WTC11 (cell line): ENCODE measurements at regions of chr11 and their contacts with region 1.

Region 1: GRCh38 chr11:123020968-123021367 is 39.3 kb upstream of the BSX start:
- DNase-seq: peak; percentile 36
- ATAC-seq: peak; percentile 95
- H3K4me3 Mint-ChIP-seq: no peak overlapping the region
- H3K27ac Mint-ChIP-seq: no peak overlapping the region
- H3K4me1 Mint-ChIP-seq: peaks cover 8% of the 10 kb centered on the region
- H3K27me3 Mint-ChIP-seq: peaks cover 9% of the 10 kb centered on the region
- CTCF ChIP-seq: no peak; the same call in 1 of the 2 replicates

Region 2: GRCh38 chr11:122796128-122796717 is 224.7 kb before region 1 on chr11:
- CTCF ChIA-PET with region 1: interaction called, 11 read pairs
- POLR2A ChIA-PET with region 1: no interaction called
- DNase-seq: peak; percentile 84
- ATAC-seq: peak; percentile 98
- H3K4me3 Mint-ChIP-seq: no peak overlapping the region
- H3K27ac Mint-ChIP-seq: no peak overlapping the region
- H3K4me1 Mint-ChIP-seq: peaks cover 4% of the 10 kb centered on the region; the same call in 1 of the 2 replicates
- H3K27me3 Mint-ChIP-seq: no peaks in the 10 kb centered on the region
- CTCF ChIP-seq: peak; percentile 86

Region 3: DNA sequence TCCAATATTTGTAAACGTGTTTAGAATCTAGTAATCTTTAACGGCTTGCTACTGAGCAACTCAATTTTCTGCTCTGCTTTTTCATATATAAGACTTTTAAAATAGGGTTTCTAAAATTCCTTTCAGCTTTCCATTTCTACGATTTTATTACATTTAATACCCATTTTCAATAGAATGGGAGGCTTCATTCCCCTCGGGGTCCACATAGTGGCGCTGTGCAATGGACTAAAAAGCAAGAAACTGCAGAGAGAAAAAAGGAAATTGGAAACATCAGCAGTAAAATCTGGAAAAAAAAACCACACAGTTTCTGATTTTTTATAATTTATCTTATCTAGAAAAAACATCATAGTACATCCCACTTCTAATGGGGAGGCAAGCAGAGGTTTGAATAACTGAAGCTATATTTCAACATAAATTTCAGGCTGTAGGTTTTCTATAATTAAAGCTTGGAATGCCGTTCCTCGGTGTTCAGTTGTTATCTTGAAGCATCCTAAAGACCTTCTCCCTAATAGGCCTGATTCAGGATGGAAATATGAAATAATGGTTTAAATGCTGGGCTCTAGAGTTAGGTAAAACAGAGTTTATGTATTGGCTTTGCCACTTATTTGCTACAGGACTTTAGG is 157.2 kb before region 1 on chr11:
- CTCF ChIA-PET with region 1: interaction called, 55 read pairs
- POLR2A ChIA-PET with region 1: no interaction called
- DNase-seq: peak; percentile 47
- ATAC-seq: no peak
- H3K4me3 Mint-ChIP-seq: no peak overlapping the region
- H3K27ac Mint-ChIP-seq: no peak overlapping the region
- H3K4me1 Mint-ChIP-seq: no peaks in the 10 kb centered on the region; the same call in 1 of the 2 replicates
- H3K27me3 Mint-ChIP-seq: no peaks in the 10 kb centered on the region
- CTCF ChIP-seq: peak; percentile 44; the same call in 1 of the 2 replicates

Region 4: DNA sequence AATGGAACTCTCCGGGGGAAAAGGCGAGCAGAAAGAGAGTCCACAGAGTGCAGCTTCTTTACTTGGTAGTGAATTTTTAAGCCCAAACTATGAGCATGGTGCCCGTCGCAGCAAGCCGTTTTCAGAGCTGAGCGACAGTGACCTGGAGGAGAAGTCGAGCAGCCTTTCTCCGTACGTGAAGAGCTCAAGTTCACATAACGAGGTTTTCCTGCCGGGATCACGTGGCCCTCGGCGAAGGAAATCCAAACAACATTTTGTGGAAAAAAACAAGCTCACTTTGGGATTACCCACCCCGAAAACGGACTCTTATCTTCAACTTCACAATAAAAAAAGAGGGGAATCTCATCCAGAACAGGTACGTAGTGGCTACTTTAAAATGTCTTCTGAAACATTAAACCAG is 116.9 kb before region 1 on chr11:
- CTCF ChIA-PET with region 1: interaction called, 13 read pairs
- POLR2A ChIA-PET with region 1: no interaction called
- DNase-seq: no peak
- ATAC-seq: no peak
- H3K4me3 Mint-ChIP-seq: no peak overlapping the region
- H3K27ac Mint-ChIP-seq: peak overlapping the region; percentile 57
- H3K4me1 Mint-ChIP-seq: peaks cover 6% of the 10 kb centered on the region
- H3K27me3 Mint-ChIP-seq: no peaks in the 10 kb centered on the region
- CTCF ChIP-seq: no peak

Region 5: GRCh38 chr11:122981388-122982264 is 39.3 kb before region 1 on chr11 and contains the start of gene BSX:
- CTCF ChIA-PET with region 1: interaction called, 38 read pairs
- POLR2A ChIA-PET with region 1: interaction called, 3 read pairs
- DNase-seq: peak; percentile 95
- ATAC-seq: peak; percentile 80
- H3K4me3 Mint-ChIP-seq: peak within 1 kb of the TSS; percentile 47
- H3K27ac Mint-ChIP-seq: no peak within 1 kb of the TSS
- H3K4me1 Mint-ChIP-seq: peaks cover 51% of the 10 kb centered on the region
- H3K27me3 Mint-ChIP-seq: peaks cover 100% of the 10 kb centered on the region
- CTCF ChIP-seq: no peak
- total RNA-seq, gene BSX: not detected in 3 replicates

Region 6: DNA sequence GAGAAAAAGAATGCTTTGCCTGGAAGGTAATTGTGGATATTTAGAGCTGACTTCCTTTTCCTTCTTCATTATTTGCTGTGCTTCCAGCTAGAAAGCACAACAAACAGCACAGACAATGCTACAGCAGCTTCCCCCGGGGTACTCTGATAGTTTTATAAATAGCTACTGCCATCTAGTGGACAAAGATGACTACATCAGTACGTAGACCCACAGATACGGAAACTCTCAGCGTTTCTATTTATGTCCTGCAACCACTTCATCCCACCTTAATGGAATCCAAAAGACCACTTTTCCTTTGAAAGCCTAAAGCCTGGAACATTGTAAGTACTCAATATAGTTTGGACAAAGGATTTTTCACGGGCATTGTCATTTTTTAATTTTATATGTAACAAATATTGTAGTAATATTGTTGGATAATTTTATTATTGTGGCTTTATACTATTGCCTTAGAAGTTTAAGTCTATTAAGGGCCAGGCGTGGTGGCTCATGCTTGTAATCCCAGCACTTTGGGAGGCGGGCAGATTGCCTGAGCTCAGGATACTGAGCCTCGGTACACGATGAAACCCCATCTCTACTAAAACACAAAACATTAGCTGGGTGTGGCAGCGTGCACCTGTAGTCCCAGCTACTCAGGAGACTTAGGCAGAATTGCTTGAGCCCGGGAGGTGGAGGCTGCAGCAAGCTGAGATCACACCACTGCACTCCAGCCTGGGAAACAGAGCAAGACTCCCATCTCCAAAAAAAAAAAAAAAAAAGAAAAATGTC is 33.5 kb after region 1 on chr11:
- CTCF ChIA-PET with region 1: interaction called, 31 read pairs
- POLR2A ChIA-PET with region 1: no interaction called
- DNase-seq: no peak
- ATAC-seq: peak; percentile 62
- H3K4me3 Mint-ChIP-seq: no peak overlapping the region
- H3K27ac Mint-ChIP-seq: peak overlapping the region; percentile 82
- H3K4me1 Mint-ChIP-seq: peaks cover 21% of the 10 kb centered on the region
- H3K27me3 Mint-ChIP-seq: no peaks in the 10 kb centered on the region
- CTCF ChIP-seq: peak; percentile 52; the same call in 1 of the 2 replicates